Head of caudate nucleus (tissue), 42 donors: ENCODE measurements at regions of chr12 and their contacts with region 1.

Region 1: DNA sequence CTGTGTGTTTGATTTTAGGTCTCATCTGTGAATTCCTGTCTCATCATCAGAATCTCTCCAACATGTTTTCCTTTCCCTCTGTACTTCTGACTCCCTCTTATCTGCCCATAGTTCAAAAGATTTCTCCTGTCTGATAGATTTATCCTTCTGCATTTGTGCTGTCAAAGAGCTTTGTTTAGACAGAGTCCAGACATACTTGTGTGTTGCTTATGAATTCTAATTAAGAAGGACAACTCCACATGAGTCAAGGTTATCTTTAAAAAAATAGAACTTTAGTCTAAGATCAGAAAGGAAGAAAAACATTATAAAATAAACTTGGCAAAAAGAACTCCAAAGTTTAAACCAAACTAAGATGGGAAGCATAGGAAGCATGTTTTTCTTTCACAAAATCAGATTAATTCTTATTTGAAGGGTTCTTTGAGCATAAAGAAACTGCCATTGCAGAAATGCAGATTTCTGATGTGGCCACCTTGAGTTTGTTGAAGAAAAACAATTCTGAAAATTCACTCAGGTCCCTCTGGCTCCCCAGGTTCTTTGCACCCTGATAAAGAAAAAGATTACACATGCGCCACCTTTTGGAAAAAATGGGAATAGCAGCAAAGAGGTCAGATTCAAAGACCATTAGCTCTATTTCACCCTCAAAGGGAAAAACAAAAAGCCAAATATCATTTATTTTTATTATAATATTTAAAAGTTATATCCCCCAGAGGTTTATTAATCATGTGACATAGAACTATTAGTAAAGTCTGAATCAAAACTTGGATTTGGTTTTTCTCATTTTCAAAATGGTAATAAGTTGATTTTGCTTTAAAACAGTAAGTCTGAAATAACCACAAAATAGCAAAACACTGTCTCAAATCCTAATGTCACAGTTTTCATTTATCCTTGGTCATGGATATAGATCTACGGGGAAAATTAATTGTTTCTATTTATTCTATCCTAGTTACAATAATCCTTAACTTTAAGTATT is 143.7 kb upstream of the DCN start:
- DNase-seq: peak in 28 of 42 donors; percentile 8 to 83 (median 52)

Region 2: GRCh38 chr12:91180582-91181395 is 145.6 kb before region 1 on chr12:
- intact Hi-C with region 1: loop called (anchors 10 kb)
- DNase-seq: no peak